ENCODE measurements at regions of chr19 and their contacts with region 1.

Region 1: DNA sequence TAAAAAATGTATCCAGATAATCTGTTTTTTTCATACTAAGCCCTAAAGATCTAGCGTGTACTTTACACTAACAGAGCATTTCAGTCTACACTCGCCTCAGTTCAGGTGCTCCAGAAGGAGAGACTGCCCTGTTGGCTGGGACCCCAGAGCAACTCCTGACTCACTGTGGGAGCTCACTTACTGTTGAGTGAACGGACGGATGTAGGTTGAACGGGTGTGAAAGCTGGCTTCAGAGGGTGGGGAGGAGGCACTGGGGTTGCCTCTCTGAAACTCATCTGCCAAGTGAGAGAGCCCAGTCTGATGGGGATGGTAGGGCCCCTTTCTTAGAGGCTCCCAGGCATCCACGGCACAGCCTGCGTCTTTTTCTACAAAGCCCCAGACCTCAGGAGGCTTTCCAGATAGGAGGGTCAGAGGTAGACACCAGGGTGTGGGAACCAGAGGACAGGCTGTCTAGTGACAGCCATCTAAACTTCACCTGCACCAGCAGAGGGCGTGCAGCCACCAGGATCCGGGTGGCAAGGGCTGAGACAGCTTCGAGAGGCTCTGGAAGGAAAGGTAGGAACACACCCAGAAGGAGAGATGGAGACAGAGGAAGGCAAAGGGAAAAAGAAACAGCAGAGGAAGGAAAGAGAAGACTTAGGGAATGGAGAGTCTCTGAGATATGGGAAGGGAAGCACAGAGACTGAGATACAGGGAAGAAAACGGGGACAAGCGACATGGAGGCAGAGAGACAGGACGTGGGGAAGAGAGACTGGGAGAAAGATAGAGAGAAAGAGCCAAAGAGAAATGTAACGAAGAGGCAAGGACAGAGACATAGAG is 3.7 kb downstream of the KASH5 start:
- DNase-seq: peak; percentile 78 to 89 (median 89)
- ATAC-seq: peak; percentile 80 to 83
- H3K4me3 ChIP-seq: no peak overlapping the region
- H3K27ac ChIP-seq: no peak overlapping the region
- H3K4me1 ChIP-seq: no peaks in the 10 kb centered on the region
- H3K27me3 ChIP-seq: no peaks in the 10 kb centered on the region

Region 2: DNA sequence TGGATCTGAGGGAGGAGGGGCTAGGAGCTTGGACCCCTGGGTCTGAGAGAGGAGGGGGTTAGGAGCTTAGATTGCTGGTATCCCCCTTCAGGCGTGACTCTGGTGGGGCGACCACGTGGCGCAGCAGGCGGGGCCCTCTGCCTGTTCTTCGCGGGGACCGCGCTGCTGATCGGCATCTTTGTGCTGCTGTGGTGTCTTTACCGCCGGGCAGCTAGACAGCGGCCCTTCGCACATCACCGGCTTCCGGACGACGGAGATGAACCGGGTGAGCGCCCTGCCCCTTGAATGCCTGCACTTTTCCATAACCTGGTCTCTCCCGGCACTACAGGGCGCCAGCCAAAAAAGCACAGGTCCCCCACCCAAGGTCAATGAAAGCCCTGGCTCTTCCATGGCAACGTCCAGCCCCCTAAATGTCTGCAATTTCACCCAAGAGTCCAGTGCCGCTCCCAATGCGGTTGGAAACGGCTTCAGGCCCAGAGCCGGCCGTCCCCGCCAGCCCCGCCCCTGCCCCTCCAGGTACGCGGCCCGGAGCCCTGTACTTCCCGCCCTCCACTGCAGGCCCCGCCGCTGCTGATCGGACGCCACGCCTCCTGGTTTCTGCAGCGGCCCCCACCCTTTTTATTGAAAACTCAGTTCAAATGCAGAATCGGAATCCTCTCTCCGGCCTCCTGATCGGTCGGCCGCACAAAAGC is 36.2 kb after region 1 on chr19:
- intact Hi-C with region 1: loop called in 1 of 4 experiments (anchors 5 kb)
- DNase-seq: peak in 1 of 3 donors; percentile 44
- ATAC-seq: no peak
- H3K4me3 ChIP-seq: peak overlapping the region; percentile 11
- H3K27ac ChIP-seq: no peak overlapping the region
- H3K4me1 ChIP-seq: no peaks in the 10 kb centered on the region
- H3K27me3 ChIP-seq: no peaks in the 10 kb centered on the region

Region 3: DNA sequence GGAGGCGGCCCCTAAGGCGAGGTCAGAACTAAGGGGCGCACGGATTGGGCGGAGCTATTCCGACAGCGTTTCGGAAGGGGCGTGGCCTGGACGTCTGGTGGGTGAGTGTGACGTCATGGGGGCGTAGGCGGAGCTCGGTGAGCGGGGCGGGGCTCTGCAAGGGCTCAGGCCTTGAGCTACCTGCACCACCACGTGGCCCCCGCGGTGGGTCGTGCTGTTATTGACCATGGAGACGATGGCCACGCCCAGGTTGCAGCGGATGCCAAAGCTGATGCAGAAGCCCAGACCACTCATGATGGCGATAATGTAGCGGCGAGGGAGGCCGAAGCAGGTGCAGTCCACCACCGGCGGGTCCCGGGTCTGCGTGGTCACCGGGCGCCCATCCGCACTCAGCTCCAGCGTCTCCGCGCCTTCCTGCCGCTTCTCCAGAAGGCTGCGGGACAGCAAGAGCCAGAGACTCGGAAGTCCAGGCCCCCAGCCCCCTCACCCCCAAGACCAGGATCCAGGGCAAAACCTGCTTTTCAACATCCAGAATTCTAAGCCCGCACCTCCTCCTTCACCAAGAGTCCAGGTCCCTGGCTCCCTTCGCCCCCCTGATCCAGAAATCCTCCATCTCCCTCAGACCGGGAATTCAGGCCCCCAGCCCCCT is 44.7 kb after region 1 on chr19:
- intact Hi-C with region 1: loop called in 3 of 4 experiments (anchors 5 kb)
- DNase-seq: peak in 1 of 3 donors; percentile 67
- ATAC-seq: no peak
- H3K4me3 ChIP-seq: no peak overlapping the region
- H3K27ac ChIP-seq: no peak overlapping the region
- H3K4me1 ChIP-seq: no peaks in the 10 kb centered on the region
- H3K27me3 ChIP-seq: no peaks in the 10 kb centered on the region

Measured in right cardiac atrium (tissue), 5 donors.